ENCODE measurements at regions of chr6 and their contacts with region 1.

Region 1: DNA sequence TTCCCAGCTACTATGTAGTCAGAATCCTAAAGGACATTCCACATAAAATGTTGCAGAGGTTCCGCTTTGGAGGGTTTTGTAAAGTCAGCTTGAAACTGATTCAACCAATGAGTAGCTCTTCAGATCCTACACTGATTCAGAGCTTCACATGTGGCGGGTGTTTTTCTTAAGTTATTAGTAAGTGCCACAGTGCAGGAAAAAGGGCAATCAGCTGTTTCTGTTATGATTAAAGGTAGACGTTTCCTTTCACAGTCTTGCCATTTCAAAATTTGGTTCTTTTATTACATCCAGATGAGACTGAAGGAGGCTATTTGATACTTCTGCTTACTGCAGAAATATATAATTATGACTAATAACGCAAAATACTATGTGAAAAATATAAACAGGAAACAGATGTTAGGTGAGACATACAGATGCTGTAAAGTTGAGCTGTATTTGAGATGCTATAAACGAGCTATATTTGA is 443.9 kb downstream of the CDKAL1 start:
- DNase-seq: no peak

Region 2: GRCh38 chr6:21037453-21037852 is 59.3 kb after region 1 on chr6:
- in situ Hi-C with region 1: loop called (anchors 5 kb)
- DNase-seq: no peak

Measured in G401 (cell line).